SK-N-SH (cell line): ENCODE measurements at regions of chr17 and their contacts with region 1.

Region 1: GRCh38 chr17:40531051-40531991 is 29.9 kb upstream of the TNS4 start:
- DNase-seq: no peak
- H3K4me3 ChIP-seq: no peak overlapping the region
- H3K27ac ChIP-seq: no peak overlapping the region
- H3K4me1 ChIP-seq: peaks cover 0 to 7% of the 10 kb centered on the region in 2 experiments; a peak in 1 of 4 replicates
- H3K27me3 ChIP-seq: no peaks in the 10 kb centered on the region
- CTCF ChIP-seq: no peak
- EP300 ChIP-seq: no peak
- RAD21 ChIP-seq: no peak

Region 2: DNA sequence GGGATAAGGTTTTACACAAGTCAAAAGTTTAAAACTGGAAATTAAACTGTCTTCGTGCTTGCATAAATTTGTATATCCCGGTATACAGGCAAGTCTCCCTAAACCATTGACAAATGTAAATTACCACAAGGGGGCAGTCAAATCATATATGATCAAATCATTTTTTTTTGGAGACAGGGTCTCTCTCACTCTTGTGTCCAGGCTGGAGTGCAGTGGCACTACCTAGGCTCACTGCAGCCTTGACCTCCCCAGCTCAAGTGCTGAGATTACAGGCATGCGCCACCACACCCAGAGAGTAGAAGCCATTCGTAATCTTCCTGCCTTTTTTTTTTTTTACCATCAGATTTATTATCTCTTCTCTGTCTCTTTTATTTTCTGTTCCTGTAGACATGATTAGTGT is 132.1 kb before region 1 on chr17:
- CTCF ChIA-PET with region 1: interaction called, 29 read pairs
- POLR2A ChIA-PET with region 1: no interaction called
- DNase-seq: peak; percentile 48
- H3K4me3 ChIP-seq: no peak overlapping the region
- H3K27ac ChIP-seq: peak overlapping the region in 1 of 2 experiments; percentile 19; a peak in 1 of 4 replicates
- H3K4me1 ChIP-seq: no peaks in the 10 kb centered on the region; a peak in 1 of 4 replicates
- H3K27me3 ChIP-seq: no peaks in the 10 kb centered on the region
- CTCF ChIP-seq: peak; percentile 64
- EP300 ChIP-seq: no peak
- RAD21 ChIP-seq: peak; percentile 69

Region 3: DNA sequence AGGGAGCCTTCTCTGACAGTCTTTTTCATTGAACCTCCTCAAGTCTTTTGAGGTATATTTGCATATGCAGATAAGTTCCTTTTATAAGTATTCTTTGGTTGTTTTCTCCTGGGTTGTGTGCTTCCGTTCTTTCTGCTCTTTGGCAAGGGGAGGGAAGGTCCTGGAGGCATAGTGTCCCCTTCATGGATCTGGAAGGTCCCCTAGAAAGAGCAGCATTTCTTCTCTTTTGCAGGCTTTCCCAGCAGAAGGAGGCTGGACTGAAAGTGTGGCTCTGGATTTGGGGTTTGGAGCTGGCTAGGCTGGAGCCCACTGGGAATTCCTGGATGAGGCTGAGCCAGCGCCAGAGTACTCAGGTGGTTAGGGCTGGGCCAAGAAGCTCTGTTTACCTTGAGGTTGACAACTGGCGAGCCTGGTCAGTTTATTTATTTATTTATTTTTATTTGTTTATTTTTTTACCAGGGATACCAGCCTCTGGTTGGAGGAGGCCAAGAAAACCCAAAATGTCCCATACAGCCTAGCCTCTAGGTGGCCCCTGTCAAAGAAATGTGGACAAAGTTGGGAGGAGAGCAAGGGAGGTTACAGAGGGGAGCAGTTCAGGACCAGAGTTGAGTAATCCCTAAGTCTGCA is 108.2 kb before region 1 on chr17:
- CTCF ChIA-PET with region 1: interaction called, 36 read pairs
- POLR2A ChIA-PET with region 1: no interaction called
- DNase-seq: no peak
- H3K4me3 ChIP-seq: no peak overlapping the region
- H3K27ac ChIP-seq: no peak overlapping the region
- H3K4me1 ChIP-seq: peaks cover 0 to 6% of the 10 kb centered on the region in 2 experiments; a peak in 1 of 4 replicates
- H3K27me3 ChIP-seq: no peaks in the 10 kb centered on the region
- CTCF ChIP-seq: no peak; the same call in 1 of the 2 replicates
- EP300 ChIP-seq: no peak
- RAD21 ChIP-seq: no peak

Region 4: GRCh38 chr17:40480501-40481003 is 50.8 kb before region 1 on chr17:
- CTCF ChIA-PET with region 1: interaction called, 116 read pairs
- POLR2A ChIA-PET with region 1: no interaction called
- DNase-seq: no peak
- H3K4me3 ChIP-seq: no peak overlapping the region
- H3K27ac ChIP-seq: no peak overlapping the region
- H3K4me1 ChIP-seq: peaks cover 4 to 16% of the 10 kb centered on the region in 2 experiments; a peak in 2 of 4 replicates
- H3K27me3 ChIP-seq: no peaks in the 10 kb centered on the region
- CTCF ChIP-seq: no peak
- EP300 ChIP-seq: no peak
- RAD21 ChIP-seq: no peak

Region 5: DNA sequence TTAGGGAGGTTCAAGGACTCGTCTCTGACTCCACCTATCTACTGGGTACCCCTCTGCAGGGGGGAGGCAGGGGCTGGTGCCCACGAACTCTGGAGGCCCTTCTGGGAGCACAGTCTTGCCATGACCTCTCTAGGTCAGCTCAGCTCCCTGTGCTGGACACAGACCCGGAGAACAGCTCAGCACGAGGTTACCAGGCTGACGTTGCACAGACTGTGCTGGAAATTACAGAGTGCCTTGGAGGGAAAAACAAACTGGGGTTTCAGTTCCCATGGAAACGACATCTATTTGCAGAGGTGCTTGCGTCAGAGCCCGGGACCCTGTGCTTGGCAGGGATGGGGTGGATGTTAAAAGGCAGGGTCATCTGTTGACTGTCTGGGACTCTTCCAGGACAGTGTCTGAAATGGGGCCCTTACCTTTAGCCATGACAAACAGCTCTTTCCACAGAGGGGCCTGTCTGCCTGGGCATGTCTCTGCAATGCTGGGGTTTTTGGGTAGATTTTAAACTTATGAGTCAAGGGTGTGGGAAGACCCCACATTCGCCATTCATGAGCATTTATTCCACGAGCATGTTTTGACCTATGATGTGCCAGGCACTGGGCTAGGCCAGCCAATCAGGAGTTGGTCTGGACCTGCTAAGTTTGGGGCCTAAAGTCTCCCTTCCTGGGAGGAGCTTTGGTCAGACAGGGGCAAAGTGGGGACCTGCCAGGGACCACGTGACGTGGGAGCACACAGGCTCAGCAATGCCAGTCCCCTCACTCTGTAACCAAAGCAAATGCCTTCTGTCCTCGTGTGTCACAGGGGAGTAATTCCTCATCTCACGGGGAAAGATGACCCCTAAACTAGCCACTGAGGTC is 11.5 kb after region 1 on chr17:
- CTCF ChIA-PET with region 1: interaction called, 34 read pairs
- POLR2A ChIA-PET with region 1: interaction called, 4 read pairs
- DNase-seq: peak; percentile 88
- H3K4me3 ChIP-seq: no peak overlapping the region
- H3K27ac ChIP-seq: peak overlapping the region; percentile 63 to 96
- H3K4me1 ChIP-seq: peaks cover 8 to 79% of the 10 kb centered on the region in 2 experiments; a peak in 3 of 4 replicates
- H3K27me3 ChIP-seq: no peaks in the 10 kb centered on the region
- CTCF ChIP-seq: no peak
- EP300 ChIP-seq: peak in 1 of 2 experiments; percentile 91; a peak in 2 of 4 replicates
- RAD21 ChIP-seq: no peak